Posterior cingulate gyrus (tissue), 11 donors: ENCODE measurements at regions of chr12 and their contacts with region 1.

Region 1: GRCh38 chr12:69157023-69157655 is 82.2 kb upstream of the CPSF6 start:
- DNase-seq: peak; percentile 68 to 97 (median 88)

Region 2: DNA sequence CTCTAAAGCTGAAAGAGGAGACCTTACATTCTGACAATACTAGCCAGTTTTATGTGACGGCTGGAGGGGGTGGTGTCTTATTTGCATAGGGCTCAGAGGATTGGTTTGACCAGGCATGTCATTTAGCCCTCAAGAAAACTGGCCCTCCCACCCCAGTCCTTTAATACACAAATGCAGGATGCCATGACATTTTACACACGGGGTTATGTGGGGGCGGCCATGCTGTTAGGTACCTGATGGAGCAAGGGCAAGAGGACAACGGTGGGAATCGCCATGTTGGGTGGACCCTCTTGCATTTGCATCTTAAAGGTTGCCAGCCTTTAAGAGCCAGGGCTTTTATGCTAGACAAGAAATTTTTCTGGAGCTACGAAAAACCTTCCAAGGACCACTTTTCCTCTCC is 325.9 kb before region 1 on chr12:
- intact Hi-C with region 1: loop called (anchors 10 kb)
- DNase-seq: no peak

Region 3: DNA sequence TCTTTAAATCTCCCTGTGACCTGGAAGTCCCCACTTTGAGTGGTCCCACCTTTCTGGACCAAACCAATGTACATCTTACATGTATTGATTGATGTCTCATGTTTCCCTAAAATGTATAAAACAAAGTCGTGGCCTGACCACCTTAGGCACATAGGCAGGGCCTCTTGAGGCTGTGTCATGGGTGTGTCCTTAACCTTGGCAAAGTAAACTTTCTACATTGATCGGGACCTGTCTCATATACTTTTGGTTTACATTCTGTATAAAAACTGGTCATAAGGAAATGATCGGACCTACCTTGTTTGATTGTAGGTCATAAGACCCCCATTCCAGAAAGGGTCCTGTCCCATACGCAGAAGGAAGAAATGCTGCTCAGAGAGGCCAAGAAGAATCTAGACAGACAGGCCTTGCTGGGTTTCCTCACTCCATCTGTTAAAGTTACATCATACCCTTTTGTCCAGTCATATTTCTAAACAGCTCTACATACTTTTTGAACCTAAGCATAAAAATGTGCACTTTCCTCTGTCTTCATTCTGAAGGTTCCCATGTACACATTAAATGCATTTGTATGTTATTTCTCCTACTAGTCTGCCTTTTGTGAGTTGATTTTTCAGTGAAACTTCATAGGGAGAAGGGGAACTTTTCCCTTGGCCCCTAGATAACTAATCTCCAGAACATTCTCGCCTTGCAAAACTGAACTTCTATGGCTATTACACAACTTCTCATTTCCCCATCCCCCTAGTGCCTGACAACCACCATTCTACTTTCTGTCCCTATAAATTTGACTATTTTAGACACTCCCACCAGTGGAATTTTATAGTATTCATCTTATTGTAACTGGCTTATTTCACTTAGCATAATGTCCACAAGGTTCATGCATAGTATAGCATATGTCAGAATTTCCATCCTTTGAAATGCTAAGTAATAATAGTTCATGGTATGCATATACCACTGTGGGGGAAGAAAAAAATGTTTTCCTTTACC is 194.0 kb before region 1 on chr12:
- intact Hi-C with region 1: no loop called
- DNase-seq: no peak

Region 4: GRCh38 chr12:69123919-69124638 is 33.1 kb before region 1 on chr12:
- intact Hi-C with region 1: no loop called
- DNase-seq: no peak

Region 5: DNA sequence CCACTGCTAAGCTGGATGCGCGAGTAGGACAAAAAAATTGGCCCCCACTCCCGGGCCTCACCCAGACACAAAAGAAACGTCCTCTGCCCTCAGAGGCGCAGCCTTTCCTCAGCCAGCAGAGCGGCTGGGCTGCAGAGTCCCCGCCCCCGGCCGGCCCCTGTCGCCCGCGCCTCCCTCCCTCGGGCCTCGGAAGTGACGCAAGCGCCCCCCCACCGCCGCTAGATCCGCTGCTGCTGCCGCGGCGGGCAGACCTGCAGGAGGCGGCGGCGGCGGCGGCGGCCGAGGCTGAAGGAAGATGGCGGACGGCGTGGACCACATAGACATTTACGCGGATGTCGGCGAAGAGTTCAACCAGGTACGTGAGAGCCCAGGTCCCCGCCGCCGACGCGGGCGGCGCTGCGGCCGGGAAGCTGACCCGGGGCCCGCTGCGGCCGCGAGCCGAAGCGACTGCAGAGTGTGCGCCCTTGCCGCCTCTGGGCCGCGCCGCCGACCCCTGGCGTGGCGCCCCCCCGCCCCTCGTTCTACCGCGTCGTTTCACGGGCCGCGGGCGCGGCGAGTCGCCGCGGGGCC is 82.3 kb after region 1 on chr12 and contains the start of gene CPSF6:
- intact Hi-C with region 1: loop called (anchors 1 kb)
- DNase-seq: peak; percentile 95 to 99 (median 97)

Region 6: DNA sequence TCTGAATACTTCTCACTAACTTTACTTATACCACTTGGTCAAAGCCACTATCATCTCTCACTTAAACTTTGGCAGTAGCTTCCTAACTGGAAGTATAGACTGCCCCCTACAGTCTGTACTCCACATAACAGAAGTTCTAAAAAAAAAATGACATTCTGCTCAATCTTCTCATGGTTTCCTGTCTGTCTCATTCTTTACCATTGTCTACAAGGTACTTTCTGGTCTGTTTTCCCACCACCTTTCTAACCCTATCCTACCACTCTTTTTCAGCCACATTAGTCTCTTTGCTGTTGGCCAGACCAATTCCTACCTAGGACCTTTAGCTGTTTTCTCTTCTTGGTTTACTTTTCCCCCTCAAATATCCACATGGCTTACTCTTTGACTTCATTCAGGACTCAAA is 96.9 kb after region 1 on chr12:
- intact Hi-C with region 1: loop called (anchors 1 kb)
- DNase-seq: no peak